AG04449 (cell line): ENCODE measurements at regions of chr2 and their contacts with region 1.

Region 1: DNA sequence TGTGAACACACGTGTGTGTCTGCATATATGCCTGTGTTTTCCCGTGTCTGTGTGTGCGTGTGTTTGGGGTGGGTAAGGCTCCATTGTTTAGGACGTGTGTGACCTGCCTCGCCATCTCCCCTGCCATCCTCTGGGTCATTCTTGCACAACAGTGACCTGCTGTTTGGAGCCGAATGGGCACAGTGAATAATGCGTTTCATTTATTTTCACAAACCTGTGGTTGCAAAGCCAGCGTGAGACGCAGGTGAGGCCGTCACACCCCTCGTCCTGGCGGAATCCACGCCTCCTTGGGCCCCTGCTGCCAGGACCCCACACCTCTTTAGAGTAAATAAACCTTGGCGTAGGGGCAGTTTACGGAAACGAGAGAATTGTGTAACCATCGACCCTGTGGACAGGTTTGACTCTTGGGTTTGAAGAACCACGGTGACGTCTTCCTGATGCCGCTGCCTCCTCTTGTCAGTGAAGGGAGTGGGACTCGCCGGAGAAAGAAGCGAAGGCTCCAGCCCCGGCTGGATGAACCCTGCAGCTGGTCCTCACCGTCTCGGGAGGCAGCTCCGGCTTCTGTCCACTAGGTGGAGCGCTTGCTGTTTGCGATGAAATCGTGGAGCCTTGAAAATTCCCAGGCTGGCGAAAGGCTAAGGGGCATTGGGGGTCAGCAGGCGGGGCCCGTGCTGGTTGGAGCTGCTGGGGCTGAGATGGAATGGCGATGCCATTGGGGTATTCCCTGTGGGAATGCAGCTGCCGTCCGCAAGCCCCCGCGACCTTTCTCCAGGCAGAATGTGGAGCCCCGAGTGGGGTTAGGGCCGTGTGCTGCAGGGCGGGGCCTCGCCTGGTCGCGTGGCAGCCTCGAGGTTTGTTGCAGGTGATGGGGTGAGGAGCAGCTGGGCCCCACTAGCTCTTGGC is 81.1 kb downstream of the RTP5 start:
- DNase-seq: no peak
- H3K4me3 ChIP-seq: peak overlapping the region; percentile 15; the same call in 1 of the 2 replicates
- CTCF ChIP-seq: peak; percentile 88

Region 2: GRCh38 chr2:241432824-241433448 is 517.7 kb before region 1 on chr2:
- CTCF ChIA-PET with region 1: no interaction called
- POLR2A ChIA-PET with region 1: no interaction called
- DNase-seq: no peak
- H3K4me3 ChIP-seq: no peak overlapping the region
- CTCF ChIP-seq: no peak

Region 3: GRCh38 chr2:241933179-241933911 is 17.3 kb before region 1 on chr2:
- CTCF ChIA-PET with region 1: interaction called, 13 read pairs
- POLR2A ChIA-PET with region 1: no interaction called
- DNase-seq: no peak
- H3K4me3 ChIP-seq: no peak overlapping the region
- CTCF ChIP-seq: no peak

Region 4: DNA sequence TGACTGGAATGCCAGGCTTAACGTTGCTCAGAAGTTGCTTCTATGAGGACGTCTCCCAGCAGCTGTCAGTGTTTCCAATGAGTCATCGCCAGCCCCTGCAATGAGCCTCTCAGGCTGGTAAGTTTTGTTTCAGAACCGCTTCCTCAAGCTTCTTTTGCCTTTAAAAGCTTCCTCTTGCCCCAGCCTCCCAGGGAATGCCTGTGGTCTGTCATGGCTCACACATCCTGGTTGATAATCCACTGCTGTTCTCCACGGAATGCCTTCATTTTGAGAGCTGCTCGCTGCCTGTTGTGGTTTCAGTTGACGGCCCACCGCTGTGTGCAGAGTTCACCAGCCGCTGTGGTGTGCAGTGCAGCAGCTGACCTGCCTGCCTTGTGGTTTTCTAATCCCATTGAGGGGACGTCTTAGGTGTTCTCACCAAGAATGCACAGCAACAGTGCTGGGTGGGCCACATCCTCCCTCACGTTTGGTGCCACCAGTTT is 15.3 kb after region 1 on chr2:
- CTCF ChIA-PET with region 1: interaction called, 49 read pairs
- POLR2A ChIA-PET with region 1: no interaction called
- DNase-seq: peak; percentile 87
- H3K4me3 ChIP-seq: peak overlapping the region; percentile 47
- CTCF ChIP-seq: no peak

Region 5: GRCh38 chr2:241989074-241989473 is 38.4 kb after region 1 on chr2:
- CTCF ChIA-PET with region 1: no interaction called
- POLR2A ChIA-PET with region 1: no interaction called
- DNase-seq: no peak
- H3K4me3 ChIP-seq: no peak overlapping the region
- CTCF ChIP-seq: no peak

Region 6: GRCh38 chr2:242002944-242003343 is 52.3 kb after region 1 on chr2:
- CTCF ChIA-PET with region 1: interaction called, 13 read pairs
- POLR2A ChIA-PET with region 1: no interaction called
- DNase-seq: no peak
- H3K4me3 ChIP-seq: no peak overlapping the region
- CTCF ChIP-seq: no peak